ENCODE measurements at regions of chr14 and their contacts with region 1.

Region 1: DNA sequence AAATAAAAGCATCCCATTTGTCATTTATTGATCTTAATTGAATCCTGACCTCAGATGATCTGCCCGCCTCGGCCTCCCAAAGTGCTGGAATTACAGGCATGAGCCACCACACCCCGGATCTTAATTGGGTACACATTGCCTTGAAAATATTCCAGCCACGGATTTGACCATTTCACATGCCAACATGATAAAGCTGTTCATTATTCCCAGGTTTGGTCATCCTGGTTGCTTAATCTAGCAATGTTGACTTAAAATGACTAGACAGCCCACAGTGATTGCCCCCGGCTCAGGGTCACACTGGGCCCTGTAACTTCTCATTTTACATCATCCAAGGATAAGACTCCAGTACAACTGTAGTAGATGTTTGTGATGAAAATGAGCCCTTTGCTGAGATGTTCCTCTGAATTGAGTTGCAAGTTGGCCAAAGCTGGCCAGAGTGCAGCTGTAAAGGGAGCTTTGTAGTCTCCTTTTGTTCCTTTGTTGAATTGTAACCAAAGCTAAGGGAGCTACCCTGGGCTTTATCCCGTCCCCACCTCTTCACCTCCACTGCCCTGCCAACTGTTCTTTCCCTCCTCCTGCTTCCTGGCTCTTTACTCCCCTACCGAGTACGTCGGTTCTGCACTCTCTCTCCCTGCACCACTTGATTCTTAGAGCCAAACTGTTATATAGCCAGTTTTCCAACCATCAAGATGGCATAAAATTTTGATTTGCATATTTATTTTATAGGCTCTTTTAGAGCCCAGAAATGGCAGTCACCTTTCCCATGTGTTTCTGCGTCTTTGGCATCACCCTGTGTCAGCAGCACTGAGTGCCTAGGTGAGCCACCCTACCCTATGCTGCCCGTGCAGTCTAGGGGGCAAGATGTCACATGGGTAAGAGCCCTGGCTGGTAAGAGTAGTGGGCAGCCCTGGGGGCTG is 141.3 kb upstream of the HIF1A start:
- DNase-seq: peak; percentile 99
- H3K4me3 ChIP-seq: no peak overlapping the region
- CTCF ChIP-seq: no peak

Region 2: DNA sequence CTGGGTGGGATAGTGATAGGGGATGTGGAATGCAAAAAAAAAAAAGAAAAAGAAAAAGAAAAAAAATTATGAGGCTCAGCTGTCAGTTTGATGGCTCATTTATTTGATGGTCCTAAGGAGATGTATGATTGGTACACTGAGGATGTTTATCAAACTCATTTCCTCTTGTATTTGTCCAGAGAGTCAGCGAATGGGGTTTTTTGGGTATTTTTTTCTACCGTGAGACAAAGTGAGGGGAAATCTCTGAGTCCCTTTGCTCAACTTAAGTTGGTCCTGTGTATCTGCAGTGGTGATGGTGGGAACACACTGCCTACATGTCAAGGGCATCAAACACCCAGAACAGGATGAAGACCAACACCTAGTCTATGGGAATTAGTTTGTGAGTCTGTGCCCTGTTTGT is 35.6 kb before region 1 on chr14:
- CTCF ChIA-PET with region 1: no interaction called
- POLR2A ChIA-PET with region 1: no interaction called
- DNase-seq: no peak
- H3K4me3 ChIP-seq: no peak overlapping the region
- CTCF ChIP-seq: no peak

Region 3: DNA sequence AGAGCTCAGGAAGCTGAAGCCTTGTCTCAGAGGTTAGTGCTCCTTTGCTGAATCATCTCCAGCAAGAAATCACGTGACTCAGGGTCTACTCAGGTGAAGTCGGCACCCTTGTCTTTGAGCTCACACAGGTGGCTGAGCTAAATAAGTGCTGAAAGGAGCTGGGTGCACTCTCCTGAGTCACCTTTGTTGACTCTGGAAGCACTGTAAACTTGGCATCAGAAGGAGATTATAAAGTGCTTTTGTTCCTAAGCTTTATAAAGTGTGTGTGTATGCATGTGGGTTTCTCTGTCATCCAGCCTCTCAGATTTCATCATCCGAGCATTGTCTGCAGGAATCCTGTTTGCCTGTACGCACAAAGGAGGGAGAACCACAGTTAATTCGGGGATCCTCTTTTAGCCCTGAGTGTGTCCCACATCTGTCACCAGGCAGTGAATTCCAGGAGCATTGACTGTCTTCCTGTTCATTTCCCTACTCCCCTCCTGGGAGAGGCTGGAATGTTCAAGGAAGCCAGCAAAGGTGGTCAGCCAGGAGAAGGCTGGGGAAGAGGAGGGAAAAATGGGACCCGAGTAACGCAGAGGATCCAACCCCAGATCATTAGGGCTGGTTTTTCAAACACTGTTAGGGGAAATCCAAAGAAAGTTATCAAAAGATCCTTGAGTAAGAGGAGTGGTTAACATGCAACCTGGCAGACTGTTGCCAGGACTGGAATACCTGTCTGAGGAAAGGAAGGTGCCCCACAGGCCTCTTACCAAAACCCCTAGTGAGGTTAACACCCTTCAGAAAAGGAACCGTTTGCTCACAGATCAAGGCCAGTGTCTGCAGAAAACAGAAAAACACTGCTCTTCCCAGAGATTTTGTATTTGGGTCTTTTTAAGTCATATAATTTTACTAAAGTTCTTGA is 16.2 kb before region 1 on chr14:
- CTCF ChIA-PET with region 1: no interaction called
- POLR2A ChIA-PET with region 1: no interaction called
- DNase-seq: no peak
- H3K4me3 ChIP-seq: no peak overlapping the region
- CTCF ChIP-seq: no peak

Region 4: DNA sequence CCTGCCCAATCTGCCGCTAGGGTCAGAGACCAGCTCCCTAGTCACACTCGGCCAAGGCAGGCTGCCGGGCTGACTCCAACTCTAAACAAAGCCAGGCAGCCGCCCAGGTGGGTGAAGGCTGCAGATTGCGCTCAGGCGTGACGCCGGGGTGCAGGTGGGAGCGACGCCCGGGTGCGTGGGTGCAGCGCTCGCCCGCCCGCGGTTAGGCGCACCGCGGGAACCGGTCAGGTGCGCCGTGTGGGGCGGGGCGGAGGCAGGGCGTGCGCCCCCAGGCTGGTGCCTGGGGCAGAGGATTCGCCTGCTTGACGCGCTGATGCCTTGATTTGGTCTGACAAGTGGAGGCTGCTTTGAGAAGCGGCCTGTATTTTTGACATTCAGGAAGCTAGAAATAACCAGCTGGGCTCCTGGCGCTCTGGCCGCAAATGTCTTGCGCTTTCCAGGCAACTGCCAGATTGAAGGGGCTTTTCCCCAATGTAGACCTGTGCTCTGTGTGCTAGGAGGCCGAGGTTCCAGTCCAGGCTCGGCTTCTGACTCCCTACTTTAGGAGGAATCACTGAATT is 14.7 kb after region 1 on chr14:
- CTCF ChIA-PET with region 1: interaction called, 3 read pairs
- POLR2A ChIA-PET with region 1: interaction called, 10 read pairs
- DNase-seq: no peak
- H3K4me3 ChIP-seq: no peak overlapping the region
- CTCF ChIP-seq: no peak

Region 5: DNA sequence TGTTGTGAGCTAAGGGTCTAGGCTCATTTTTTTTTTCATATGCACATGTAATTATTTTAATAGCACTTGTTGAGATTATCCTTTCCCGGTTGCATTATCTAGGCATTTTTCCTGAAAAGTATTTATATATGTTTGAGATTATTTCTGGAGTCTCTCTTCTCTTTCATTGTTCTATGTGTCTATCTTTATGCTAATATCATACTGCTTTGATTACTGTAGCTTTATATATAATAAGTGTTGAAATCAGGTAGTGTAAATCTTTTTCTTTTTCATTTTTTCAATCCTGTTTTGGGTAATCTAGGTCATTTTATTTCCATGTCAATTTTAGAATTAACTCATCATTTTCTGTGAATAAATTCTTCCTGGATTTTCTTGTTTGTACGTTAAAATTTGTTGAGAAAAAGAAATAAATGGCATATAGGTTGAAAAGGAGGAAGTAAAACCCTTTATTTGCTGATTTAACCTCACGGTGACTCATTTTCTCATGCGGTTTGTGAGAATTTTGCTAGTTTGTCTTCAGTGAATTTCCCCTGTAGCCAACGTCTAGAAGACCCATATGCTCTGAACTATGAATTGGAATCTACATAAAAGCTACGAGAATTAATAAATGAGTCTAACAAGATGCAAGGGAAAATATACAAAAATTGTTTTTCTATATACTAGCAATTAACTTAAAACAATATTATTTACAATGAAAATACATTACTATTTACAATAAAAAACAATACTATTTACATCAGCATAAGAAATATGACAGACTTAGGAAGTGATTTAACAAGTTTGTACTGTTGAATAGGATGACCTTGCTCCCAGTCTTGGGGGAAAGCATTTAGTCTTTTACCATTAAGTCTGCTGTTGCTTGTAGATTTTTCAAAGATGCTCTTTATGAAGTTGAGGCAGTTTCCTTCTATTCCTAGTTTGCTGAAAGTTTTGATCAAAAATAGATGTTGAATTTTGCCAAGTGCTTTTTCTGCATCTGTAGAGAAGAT is 313.2 kb after region 1 on chr14:
- CTCF ChIA-PET with region 1: no interaction called
- POLR2A ChIA-PET with region 1: no interaction called
- DNase-seq: no peak
- H3K4me3 ChIP-seq: no peak overlapping the region
- CTCF ChIP-seq: no peak

Measured in AG04449 (cell line).